PC-9 (cell line): ENCODE measurements at regions of chr7 and their contacts with region 1.

Region 1: GRCh38 chr7:2523941-2524807 is 4.6 kb downstream of the LFNG start:
- DNase-seq: peak; percentile 97 to 99
- H3K4me3 ChIP-seq: peak overlapping the region; percentile 37; the same call in 1 of the 2 replicates
- H3K27ac ChIP-seq: peak overlapping the region; percentile 75
- H3K4me1 ChIP-seq: peaks cover 89% of the 10 kb centered on the region
- H3K27me3 ChIP-seq: no peaks in the 10 kb centered on the region
- CTCF ChIP-seq: no peak

Region 2: GRCh38 chr7:2266908-2267307 is 257.3 kb before region 1 on chr7:
- CTCF ChIA-PET with region 1: no interaction called
- POLR2A ChIA-PET with region 1: interaction called, 29 read pairs
- intact Hi-C with region 1: no loop called
- DNase-seq: peak; percentile 93 to 96
- H3K4me3 ChIP-seq: no peak overlapping the region
- H3K27ac ChIP-seq: peak overlapping the region; percentile 86
- H3K4me1 ChIP-seq: peaks cover 41% of the 10 kb centered on the region
- H3K27me3 ChIP-seq: no peaks in the 10 kb centered on the region
- CTCF ChIP-seq: no peak

Region 3: GRCh38 chr7:2314209-2314955 is 209.8 kb before region 1 on chr7 and contains the start of gene SNX8:
- CTCF ChIA-PET with region 1: no interaction called
- POLR2A ChIA-PET with region 1: no interaction called
- intact Hi-C with region 1: loop called (anchors 5 kb)
- DNase-seq: peak; percentile 87 to 100
- H3K4me3 ChIP-seq: peak within 1 kb of the TSS; percentile 72
- H3K27ac ChIP-seq: no peak within 1 kb of the TSS
- H3K4me1 ChIP-seq: 0 out of 2 replicates have a peak, but pooled peaks cover 4% of the 10 kb centered on the region
- H3K27me3 ChIP-seq: no peaks in the 10 kb centered on the region
- CTCF ChIP-seq: no peak
- total RNA-seq, gene SNX8: 73.9 and 102 TPM in 2 replicates

Region 4: GRCh38 chr7:2431260-2431867 is 92.8 kb before region 1 on chr7:
- CTCF ChIA-PET with region 1: no interaction called
- POLR2A ChIA-PET with region 1: no interaction called
- intact Hi-C with region 1: no loop called
- DNase-seq: no peak
- H3K4me3 ChIP-seq: no peak overlapping the region
- H3K27ac ChIP-seq: no peak overlapping the region
- H3K4me1 ChIP-seq: no peaks in the 10 kb centered on the region
- H3K27me3 ChIP-seq: no peaks in the 10 kb centered on the region
- CTCF ChIP-seq: peak; percentile 85

Region 5: DNA sequence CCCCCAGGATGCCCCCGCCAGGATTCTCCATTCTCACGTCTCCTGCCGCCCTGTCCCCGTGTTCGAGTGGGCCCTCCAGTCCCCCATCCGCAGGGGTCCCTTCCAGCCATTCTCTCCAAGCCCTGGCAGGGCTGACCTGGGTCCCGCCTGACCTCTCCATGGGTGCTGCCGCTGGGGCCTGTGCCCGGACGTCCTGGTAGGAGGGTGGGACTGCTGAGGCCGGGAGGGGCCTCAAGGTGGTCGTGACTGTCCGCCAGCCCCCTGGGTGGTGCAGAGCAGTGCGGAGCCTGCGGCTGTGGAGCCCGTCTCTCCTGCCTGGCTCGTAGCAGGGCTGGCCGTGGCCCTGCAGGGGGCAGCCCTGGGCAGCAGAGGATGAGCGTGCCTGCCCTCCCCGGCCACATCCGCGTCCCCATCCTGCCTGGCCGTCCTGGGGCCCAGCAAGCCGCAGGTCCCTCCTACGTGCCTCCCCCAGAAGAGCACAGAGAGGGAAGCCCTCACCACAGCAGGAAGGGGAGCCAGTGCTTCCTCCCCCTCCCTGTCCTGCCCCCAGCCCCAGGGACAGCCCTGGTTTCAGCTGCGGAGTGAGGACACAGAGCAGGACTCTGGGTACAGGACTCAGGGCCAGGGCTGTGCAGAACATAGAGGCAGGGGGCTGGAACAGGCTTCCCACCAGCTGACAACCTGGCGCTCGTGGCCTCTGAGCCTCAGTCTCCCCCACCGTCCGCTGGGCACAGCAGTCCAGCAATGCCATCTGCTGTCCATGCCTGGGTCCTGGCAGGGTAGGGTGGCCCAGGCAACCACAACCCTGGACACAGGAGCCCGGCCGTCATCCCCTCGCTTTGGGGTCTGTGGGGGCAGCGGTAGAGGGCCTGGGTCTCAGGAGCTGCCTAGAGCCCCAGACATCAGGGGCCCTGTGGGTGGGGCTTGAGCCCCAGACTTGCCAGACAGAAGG is 46.5 kb before region 1 on chr7:
- CTCF ChIA-PET with region 1: no interaction called
- POLR2A ChIA-PET with region 1: no interaction called
- intact Hi-C with region 1: loop called (anchors 5 kb)
- DNase-seq: peak in 1 of 2 experiments; percentile 76
- H3K4me3 ChIP-seq: no peak overlapping the region
- H3K27ac ChIP-seq: no peak overlapping the region
- H3K4me1 ChIP-seq: peaks cover 8% of the 10 kb centered on the region; the same call in 1 of the 2 replicates
- H3K27me3 ChIP-seq: peaks cover 3% of the 10 kb centered on the region; the same call in 1 of the 2 replicates
- CTCF ChIP-seq: peak; percentile 87

Region 6: DNA sequence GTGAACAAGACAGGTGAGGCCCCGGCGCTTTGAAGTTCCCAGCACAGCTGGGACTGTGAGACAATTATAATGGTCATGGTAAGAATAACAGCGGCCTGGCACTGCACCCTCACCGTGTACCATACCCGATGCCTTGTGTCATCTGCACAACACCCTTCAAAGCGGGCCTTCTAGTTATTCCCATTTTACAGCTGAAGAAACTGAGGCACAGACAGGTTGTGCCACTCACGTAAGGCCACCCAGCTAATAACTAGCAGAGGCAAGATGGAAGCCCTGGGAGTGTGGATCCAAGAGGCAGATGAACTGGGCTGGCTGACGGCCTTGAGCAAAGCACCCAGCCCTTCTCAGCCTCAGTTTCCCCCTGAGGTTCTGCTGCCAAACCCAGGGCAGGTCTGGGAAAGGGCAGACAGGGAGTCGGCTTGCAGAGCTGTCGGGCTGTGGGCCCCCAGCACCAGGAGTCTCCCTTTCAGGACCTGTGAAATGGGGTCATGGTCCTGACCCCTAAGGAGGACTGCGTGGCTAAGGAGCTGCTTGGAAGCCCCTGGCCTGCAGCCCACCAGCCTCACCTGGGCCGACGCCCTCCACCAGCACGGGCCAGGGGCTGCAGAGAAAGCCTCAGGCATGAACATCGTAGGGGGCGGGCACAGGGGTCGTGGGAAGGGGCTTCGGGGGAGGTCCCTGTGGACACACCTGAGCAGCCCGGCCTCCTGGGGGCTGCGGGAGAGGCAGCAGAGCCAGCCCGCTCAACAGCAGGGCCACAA is 19.9 kb before region 1 on chr7:
- CTCF ChIA-PET with region 1: no interaction called
- POLR2A ChIA-PET with region 1: no interaction called
- intact Hi-C with region 1: no loop called
- DNase-seq: no peak
- H3K4me3 ChIP-seq: no peak overlapping the region
- H3K27ac ChIP-seq: no peak overlapping the region
- H3K4me1 ChIP-seq: peaks cover 15% of the 10 kb centered on the region
- H3K27me3 ChIP-seq: peaks cover 9% of the 10 kb centered on the region; the same call in 1 of the 2 replicates
- CTCF ChIP-seq: no peak

Region 7: DNA sequence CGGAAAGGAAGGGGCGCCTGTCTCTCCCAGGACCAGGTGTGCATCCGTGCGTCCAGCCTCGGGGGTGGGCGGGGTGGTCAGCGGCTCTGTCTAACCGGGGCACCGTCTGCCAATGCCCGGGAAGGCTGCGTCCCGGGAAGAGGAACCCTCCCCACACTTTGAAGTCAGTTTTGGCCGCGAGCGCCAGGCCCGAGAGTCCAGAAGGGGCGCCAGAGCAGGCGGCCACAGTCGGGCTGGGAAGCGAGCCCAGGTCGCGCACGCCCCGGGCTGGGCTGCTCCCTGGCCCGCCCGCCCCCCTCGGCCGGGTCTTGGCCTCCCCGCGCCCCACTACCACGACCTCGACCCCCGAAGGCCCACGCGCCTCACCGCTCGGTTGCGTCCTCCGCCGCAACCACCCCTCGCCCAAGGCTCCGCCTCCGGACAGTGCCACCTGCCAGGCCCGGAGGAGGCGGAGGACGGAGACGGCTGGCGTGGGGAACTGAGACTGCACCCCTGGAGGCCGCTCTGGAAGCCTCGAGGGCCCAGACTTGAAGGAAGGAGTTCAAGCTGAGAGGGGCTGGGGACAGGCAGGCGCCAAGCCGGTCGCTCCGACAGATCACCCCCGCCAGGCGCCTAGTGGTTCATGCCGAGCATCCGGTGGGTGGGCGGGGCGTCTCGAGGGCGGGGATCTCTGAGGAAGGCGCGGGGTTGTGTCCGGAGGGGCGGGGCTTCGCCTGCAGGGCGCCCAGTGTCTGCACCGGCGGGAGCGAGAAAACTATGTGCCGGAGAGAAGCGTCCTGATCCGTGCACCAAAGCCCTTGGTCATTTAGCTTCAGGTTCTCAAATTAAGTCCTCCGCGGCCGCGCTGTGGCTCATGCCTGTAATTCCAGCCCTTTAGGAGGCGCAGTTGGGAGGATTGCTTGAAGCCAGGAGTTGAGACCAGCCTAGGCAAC is 31.2 kb after region 1 on chr7 and contains the start of gene BRAT1:
- CTCF ChIA-PET with region 1: interaction called, 11 read pairs
- POLR2A ChIA-PET with region 1: no interaction called
- intact Hi-C with region 1: loop called (anchors 1 kb)
- DNase-seq: peak; percentile 95 to 98
- H3K4me3 ChIP-seq: peak within 1 kb of the TSS; percentile 86
- H3K27ac ChIP-seq: peak within 1 kb of the TSS; percentile 87
- H3K4me1 ChIP-seq: peaks cover 36% of the 10 kb centered on the region
- H3K27me3 ChIP-seq: no peaks in the 10 kb centered on the region
- CTCF ChIP-seq: peak; percentile 47
- total RNA-seq, gene BRAT1: 53.9 and 57.7 TPM in 2 replicates

Region 8: DNA sequence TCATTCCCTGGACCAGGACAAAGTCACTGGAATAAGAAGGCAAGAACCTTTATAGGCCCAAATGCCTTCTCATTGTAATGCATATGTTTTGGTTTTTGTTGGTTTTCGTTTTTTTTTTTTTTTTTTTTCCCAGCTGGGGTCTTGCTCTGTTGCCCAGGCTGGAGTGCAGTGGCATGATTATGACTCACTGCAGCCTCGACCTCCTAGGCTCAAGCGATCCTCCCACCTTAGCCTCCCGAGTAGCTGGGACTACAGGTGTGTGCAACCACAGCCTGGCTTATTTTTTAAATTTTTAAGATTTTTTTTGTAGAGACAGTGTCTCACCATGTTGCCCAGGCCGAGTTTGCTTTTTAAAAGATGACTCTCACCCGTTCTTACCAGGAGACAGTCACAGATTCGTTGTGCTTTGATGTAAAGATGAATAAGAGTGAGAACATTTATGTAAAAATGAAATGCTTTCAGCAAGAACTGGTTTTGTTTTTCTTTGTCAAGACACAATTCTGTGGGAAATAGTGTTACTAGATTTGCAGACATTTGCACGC is 42.2 kb after region 1 on chr7:
- CTCF ChIA-PET with region 1: interaction called, 3 read pairs
- POLR2A ChIA-PET with region 1: interaction called, 14 read pairs
- intact Hi-C with region 1: no loop called
- DNase-seq: no peak
- H3K4me3 ChIP-seq: no peak overlapping the region
- H3K27ac ChIP-seq: no peak overlapping the region
- H3K4me1 ChIP-seq: no peaks in the 10 kb centered on the region
- H3K27me3 ChIP-seq: no peaks in the 10 kb centered on the region
- CTCF ChIP-seq: no peak

Region 9: DNA sequence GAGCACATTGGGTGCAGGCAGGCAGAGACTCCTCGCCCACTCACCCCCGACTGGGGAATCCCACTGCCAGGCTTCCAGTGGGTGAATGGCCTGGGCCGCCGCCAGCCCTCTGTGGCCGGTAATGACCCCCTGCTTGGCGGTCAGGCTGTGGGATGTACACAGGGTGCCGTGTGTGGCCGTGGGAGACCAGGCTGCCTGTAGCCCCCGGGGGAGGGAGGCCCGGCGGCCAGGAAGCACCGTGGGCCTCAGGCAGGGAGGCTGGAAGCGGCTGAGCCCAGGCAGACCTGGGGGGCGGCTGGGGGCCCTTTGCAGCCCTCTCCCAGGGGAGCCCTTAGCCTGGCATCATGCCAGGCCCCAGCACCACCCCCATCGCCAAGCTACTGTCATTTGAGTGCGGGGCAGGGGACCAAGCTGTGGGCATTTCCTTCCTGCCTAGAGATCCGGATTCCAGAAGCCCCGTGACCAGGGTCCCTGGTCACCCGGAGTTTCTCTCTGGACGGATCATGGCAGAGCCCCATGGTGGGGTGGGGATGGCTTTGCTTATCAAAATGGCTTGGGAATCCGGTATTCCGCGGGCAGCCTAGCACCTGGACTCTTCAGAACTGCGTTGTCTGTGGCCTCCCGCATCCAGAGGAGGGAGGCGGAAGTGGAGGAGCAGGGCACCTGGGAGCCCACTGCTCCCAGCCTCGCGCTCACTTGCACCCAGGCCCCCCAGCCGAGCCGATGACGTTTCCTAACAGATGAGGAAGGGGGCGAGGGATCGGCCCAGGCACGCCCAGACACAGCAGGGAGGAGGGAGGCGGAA is 108.8 kb after region 1 on chr7:
- CTCF ChIA-PET with region 1: no interaction called
- POLR2A ChIA-PET with region 1: no interaction called
- intact Hi-C with region 1: loop called (anchors 2 kb)
- DNase-seq: peak in 1 of 2 experiments; percentile 56
- H3K4me3 ChIP-seq: peak overlapping the region; percentile 87
- H3K27ac ChIP-seq: peak overlapping the region; percentile 45
- H3K4me1 ChIP-seq: peaks cover 22% of the 10 kb centered on the region
- H3K27me3 ChIP-seq: no peaks in the 10 kb centered on the region
- CTCF ChIP-seq: no peak